ENCODE measurements at regions of chr11 and their contacts with region 1.

Region 1: GRCh38 chr11:12963792-12964536 is 45.2 kb upstream of the RASSF10 start:
- DNase-seq: peak; percentile 58
- H3K4me3 ChIP-seq: no peak overlapping the region
- H3K27ac ChIP-seq: no peak overlapping the region
- H3K4me1 ChIP-seq: no peaks in the 10 kb centered on the region
- H3K27me3 ChIP-seq: peaks cover 7 to 12% of the 10 kb centered on the region in 2 experiments
- CTCF ChIP-seq: peak; percentile 78 to 81
- POLR2A ChIP-seq: no peak

Region 2: GRCh38 chr11:12950681-12951080 is 13.3 kb before region 1 on chr11:
- CTCF ChIA-PET with region 1: interaction called, 12 read pairs
- POLR2A ChIA-PET with region 1: no interaction called
- dilution Hi-C with region 1: no loop called
- intact Hi-C with region 1: no loop called
- DNase-seq: no peak
- H3K4me3 ChIP-seq: no peak overlapping the region
- H3K27ac ChIP-seq: no peak overlapping the region
- H3K4me1 ChIP-seq: no peaks in the 10 kb centered on the region
- H3K27me3 ChIP-seq: peaks cover 0 to 5% of the 10 kb centered on the region in 2 experiments
- CTCF ChIP-seq: no peak
- POLR2A ChIP-seq: no peak

Region 3: DNA sequence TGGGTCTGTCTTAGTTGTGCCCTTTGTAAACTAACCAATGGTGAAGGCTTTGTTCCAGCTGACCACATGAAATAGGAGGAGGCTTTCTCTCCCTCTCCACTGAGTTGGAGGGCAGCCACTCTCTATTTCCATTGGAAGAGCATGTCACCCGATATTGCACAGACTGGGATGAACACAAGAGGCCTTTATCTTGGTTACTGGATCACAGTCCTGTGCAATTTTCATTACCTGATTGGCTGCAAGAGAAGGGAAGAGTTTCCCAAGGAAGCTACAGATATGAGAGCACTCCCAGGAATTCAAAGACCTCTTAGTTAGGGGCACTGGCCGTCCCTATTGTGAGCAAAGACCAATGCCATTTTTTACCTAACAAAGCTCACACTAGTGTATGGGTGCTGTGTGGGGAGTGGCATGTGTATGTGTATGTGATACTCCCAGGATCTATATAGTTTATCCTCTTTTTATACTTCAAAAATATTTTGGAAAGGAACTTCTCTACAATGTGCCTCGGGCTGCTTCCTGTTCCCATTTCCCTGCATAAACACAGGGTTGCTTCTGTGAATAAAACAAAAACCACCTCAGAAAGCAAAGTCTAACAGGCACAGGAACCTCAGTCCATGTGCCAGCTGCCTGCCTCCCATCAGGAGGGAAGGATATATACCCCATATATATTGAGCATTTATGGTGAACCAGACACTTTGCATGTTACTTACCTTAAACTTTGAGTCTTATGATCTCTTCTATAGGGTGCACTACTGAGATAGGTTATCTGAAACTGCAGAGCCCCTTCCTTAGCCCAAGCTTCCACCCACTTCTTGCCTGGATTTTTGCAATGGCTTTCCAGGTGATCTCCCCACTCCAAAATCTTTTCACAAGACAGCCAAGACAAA is 171.7 kb after region 1 on chr11:
- CTCF ChIA-PET with region 1: interaction called, 14 read pairs
- POLR2A ChIA-PET with region 1: no interaction called
- dilution Hi-C with region 1: no loop called
- intact Hi-C with region 1: no loop called
- DNase-seq: peak; percentile 57
- H3K4me3 ChIP-seq: no peak overlapping the region
- H3K27ac ChIP-seq: no peak overlapping the region
- H3K4me1 ChIP-seq: peaks cover 15% of the 10 kb centered on the region
- H3K27me3 ChIP-seq: no peaks in the 10 kb centered on the region
- CTCF ChIP-seq: no peak
- POLR2A ChIP-seq: no peak

Region 4: DNA sequence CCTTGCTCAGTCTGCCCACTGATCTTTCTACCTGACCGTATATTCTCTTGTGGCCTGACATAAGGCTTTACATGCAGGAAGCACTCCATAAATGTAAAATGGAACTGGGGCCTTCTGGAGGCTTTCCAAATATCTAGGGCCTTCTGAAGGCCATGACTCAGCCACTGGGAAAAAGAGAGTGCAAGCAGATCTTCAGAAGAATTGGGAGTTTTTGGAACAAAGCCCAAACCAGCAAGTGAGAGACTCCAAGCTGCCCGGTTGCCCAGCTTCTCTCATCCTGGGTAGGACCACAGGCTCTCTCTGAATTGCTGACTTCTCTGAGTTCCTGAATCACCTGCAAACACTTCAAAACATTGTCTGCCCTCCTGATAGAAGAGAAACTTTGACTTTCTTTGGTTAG is 205.7 kb after region 1 on chr11:
- CTCF ChIA-PET with region 1: interaction called, 14 read pairs
- POLR2A ChIA-PET with region 1: no interaction called
- dilution Hi-C with region 1: loop called (anchors 25 kb)
- intact Hi-C with region 1: no loop called
- DNase-seq: peak; percentile 48
- H3K4me3 ChIP-seq: no peak overlapping the region
- H3K27ac ChIP-seq: no peak overlapping the region
- H3K4me1 ChIP-seq: no peaks in the 10 kb centered on the region
- H3K27me3 ChIP-seq: peaks cover 8 to 10% of the 10 kb centered on the region in 2 experiments
- CTCF ChIP-seq: no peak
- POLR2A ChIP-seq: no peak

Region 5: GRCh38 chr11:13238879-13239514 is 275.0 kb after region 1 on chr11:
- CTCF ChIA-PET with region 1: interaction called, 26 read pairs
- POLR2A ChIA-PET with region 1: no interaction called
- dilution Hi-C with region 1: no loop called
- intact Hi-C with region 1: loop called (anchors 1 kb)
- DNase-seq: peak; percentile 38
- H3K4me3 ChIP-seq: no peak overlapping the region
- H3K27ac ChIP-seq: no peak overlapping the region
- H3K4me1 ChIP-seq: no peaks in the 10 kb centered on the region
- H3K27me3 ChIP-seq: peaks cover 11 to 20% of the 10 kb centered on the region in 2 experiments
- CTCF ChIP-seq: peak; percentile 74 to 81
- POLR2A ChIP-seq: no peak

Region 6: DNA sequence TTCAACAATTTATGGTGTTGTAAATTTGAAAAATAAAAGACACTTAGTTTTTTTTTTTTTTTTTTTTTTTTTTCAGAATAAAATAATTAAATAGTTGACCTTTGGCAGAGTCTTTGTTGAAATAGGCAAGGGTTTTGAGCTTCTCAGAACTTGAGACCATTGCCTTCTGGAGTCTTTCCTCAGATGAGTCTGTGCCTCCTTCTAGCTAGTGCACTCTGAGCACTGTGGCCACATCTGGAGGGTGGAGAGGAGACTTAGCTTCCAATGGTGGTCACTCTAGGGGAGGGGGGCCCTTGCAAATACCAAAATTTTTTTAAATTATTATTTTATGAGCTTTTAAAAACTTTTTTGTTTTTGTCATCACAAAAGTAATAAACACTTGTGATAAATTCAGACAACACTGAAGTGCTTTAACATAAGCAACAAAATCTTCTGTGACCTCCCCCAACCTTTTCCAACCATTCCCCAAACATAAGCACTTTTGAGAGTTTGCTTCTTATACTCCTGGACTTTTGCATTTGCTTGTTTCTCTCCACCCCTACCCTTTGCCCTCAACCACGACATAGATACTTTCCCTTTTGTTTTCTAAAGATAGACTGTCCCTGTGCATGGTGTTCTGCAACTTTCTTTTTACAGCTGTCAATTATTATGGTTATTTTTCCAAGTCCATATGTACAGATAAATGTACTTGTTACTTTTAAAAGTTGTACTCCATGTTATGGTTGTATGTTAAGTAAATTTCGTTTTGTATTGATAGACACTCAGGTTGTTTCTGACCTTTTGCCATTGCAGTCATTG is 354.7 kb after region 1 on chr11:
- CTCF ChIA-PET with region 1: no interaction called
- POLR2A ChIA-PET with region 1: no interaction called
- dilution Hi-C with region 1: no loop called
- intact Hi-C with region 1: no loop called
- DNase-seq: no peak
- H3K4me3 ChIP-seq: no peak overlapping the region
- H3K27ac ChIP-seq: no peak overlapping the region
- H3K4me1 ChIP-seq: no peaks in the 10 kb centered on the region
- H3K27me3 ChIP-seq: no peaks in the 10 kb centered on the region
- CTCF ChIP-seq: no peak
- POLR2A ChIP-seq: no peak

Region 7: GRCh38 chr11:13384908-13385640 is 421.1 kb after region 1 on chr11:
- CTCF ChIA-PET with region 1: interaction called, 15 read pairs
- POLR2A ChIA-PET with region 1: no interaction called
- dilution Hi-C with region 1: no loop called
- intact Hi-C with region 1: no loop called
- DNase-seq: peak; percentile 65
- H3K4me3 ChIP-seq: no peak overlapping the region
- H3K27ac ChIP-seq: no peak overlapping the region
- H3K4me1 ChIP-seq: no peaks in the 10 kb centered on the region
- H3K27me3 ChIP-seq: no peaks in the 10 kb centered on the region
- CTCF ChIP-seq: peak; percentile 50 to 58
- POLR2A ChIP-seq: no peak